ENCODE measurements at regions of chr2 and their contacts with region 1.

Region 1: GRCh38 chr2:54704688-54705605 is 18.5 kb upstream of the EML6 start:
- DNase-seq: no peak
- ATAC-seq: peak; percentile 82
- H3K4me3 ChIP-seq: no peak overlapping the region
- H3K27ac ChIP-seq: no peak overlapping the region
- H3K4me1 ChIP-seq: no peaks in the 10 kb centered on the region
- H3K27me3 ChIP-seq: no peaks in the 10 kb centered on the region

Region 2: DNA sequence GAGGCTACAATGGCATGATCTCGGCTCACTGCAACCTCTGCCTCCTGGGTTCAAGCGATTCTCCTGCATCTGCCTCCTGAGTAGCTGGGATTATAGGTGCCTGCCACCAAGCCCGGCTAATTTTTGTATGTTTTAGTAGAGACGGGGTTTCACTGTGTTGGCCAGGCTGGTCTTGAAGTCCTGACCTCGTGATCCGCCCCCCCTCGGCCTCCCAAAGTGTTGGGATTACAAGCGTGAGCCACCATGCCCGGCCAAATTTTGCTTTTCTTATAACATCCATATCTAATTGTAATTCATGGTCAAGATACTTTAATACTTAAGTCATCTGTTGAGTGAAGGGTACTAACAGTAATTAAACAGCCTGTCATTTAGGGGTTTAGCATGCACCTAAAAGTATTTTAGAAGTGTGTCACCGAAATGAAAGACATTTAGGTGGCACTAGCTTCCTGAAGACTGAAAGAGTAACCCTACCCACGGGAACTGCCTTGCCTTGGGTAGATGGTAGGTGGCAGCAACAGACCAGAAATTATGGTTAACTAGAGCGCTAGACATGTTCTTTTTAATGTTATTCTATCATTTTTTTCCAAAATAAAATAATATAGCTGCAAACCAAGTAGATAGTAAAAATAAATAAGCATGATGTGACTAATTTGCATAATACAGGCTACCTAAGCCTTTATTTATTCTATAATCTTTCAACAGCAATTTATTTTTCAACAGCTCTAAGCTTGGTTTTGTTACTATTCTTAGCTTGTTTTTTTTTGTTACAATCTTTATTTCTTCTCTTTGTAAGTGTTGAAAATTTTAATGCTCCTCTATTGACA is 598.1 kb before region 1 on chr2:
- intact Hi-C with region 1: loop called (anchors 5 kb)
- DNase-seq: no peak
- ATAC-seq: peak; percentile 78
- H3K4me3 ChIP-seq: no peak overlapping the region
- H3K27ac ChIP-seq: no peak overlapping the region
- H3K4me1 ChIP-seq: no peaks in the 10 kb centered on the region
- H3K27me3 ChIP-seq: no peaks in the 10 kb centered on the region

Region 3: GRCh38 chr2:54176577-54176976 is 528.4 kb before region 1 on chr2:
- intact Hi-C with region 1: loop called in 1 of 2 experiments (anchors 10 kb)
- DNase-seq: peak in 1 of 2 donors; percentile 81
- ATAC-seq: peak; percentile 56
- H3K4me3 ChIP-seq: no peak overlapping the region
- H3K27ac ChIP-seq: no peak overlapping the region
- H3K4me1 ChIP-seq: no peaks in the 10 kb centered on the region
- H3K27me3 ChIP-seq: no peaks in the 10 kb centered on the region

Region 4: DNA sequence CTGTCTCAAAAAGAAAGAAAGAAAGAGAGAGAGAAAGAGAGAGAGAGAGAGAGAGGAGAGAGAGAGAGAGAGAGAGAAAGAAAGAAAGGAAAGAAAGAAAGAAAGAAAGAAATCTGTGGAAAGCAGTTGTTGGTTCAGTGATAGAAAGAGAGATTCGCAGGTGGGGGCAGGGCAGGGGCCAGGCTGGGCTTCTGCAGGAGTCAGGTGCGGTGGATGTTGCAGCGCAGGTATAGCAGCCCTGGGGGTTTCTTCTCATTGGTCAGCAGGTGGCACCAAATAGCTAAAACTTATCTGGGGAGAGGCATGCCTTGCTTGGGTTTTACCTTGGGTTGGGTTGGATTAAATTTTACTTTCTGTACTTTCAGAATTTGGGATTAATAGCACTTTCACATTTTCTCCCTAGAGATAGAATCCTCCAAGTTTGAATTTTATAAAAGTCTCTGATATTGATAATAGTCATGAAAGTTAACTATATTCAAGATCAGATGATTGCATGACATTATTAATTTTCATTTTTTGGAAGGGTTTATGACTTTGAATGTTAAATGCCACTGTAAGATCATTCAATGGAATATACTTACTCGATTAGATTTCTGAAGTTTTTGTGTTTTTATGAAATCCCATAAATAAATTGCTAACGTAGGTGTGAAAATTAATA is 182.2 kb before region 1 on chr2:
- intact Hi-C with region 1: loop called in 1 of 2 experiments (anchors 5 kb)
- DNase-seq: no peak
- ATAC-seq: peak; percentile 76
- H3K4me3 ChIP-seq: no peak overlapping the region
- H3K27ac ChIP-seq: no peak overlapping the region
- H3K4me1 ChIP-seq: peaks cover 2 to 3% of the 10 kb centered on the region in 2 donors
- H3K27me3 ChIP-seq: no peaks in the 10 kb centered on the region

Region 5: DNA sequence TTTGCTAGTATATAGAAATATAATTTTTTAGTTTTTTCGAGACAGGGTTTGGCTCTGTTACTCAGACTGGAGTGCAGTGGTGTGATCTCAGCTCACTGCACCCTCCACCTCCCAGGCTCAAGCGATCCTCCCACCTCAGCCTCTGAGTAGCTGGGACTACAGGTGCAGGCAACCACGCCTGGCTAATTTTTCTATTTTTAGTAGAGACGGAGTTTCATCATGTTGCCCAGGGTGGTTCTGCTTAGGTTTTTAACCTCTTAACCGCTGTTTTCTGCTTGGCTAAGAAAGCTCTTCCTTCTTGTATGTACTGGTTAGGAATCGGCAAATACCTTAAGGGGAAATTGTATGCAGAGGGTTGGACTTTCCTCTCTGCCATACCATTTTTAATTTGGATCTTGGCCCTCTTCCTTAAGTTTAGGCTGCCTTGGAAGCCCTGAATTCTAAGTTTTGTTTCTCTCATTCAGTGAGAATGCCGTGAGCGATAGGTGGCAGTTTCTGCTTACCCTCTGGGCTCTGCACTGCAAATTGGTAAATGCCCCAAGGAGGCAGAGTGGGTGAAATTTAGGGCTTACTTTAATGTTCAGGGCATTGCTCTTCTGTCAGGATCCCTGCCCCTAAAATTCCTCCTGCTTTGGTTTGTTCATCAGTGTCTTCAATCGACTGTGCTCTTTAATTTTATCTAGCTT is 50.8 kb after region 1 on chr2:
- intact Hi-C with region 1: no loop called
- DNase-seq: no peak
- ATAC-seq: no peak
- H3K4me3 ChIP-seq: no peak overlapping the region
- H3K27ac ChIP-seq: no peak overlapping the region
- H3K4me1 ChIP-seq: no peaks in the 10 kb centered on the region
- H3K27me3 ChIP-seq: no peaks in the 10 kb centered on the region

Measured in aorta (tissue), 5 donors.